Panc1 (cell line): ENCODE measurements at regions of chr6 and their contacts with region 1.

Region 1: DNA sequence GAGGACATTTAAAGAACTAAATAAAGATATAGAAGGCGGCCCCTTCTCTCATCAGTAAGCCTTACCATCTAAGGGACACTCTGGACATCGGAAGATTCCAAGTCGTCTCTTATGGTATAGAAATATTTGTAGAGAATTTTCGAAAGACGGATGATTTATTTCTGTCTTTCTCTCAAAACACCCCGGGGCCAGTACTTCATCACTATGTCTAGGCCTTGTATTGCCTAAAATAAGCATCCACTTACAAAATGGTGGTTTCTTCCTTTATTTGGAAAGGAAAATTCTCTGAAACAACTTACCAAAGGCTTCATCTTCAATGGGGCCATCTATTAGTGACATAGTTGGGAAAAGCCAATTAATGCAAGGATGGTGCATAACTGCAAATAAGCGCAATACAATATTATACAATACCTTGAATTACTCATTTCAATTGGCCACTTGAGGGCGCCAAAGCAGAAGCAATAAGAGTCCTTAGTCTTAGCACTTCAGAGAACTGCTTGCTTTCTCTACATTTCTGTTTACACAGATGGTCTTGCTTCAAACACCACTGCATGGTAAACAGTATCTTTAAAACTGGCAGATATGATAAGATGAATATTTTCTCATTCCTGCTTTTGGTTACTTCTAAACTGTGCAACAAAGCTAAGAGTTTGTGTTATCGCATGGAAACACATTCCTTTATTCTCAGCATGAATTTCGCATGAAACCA is 113.2 kb downstream of the VIP start:
- DNase-seq: peak; percentile 43
- ATAC-seq: peak; percentile 96
- H3K4me3 ChIP-seq: no peak overlapping the region
- H3K27ac ChIP-seq: no peak overlapping the region
- H3K4me1 ChIP-seq: no peaks in the 10 kb centered on the region
- H3K27me3 ChIP-seq: no peaks in the 10 kb centered on the region; the same call in 1 of the 2 replicates
- CTCF ChIP-seq: peak; percentile 68; the same call in 1 of the 2 replicates

Region 2: DNA sequence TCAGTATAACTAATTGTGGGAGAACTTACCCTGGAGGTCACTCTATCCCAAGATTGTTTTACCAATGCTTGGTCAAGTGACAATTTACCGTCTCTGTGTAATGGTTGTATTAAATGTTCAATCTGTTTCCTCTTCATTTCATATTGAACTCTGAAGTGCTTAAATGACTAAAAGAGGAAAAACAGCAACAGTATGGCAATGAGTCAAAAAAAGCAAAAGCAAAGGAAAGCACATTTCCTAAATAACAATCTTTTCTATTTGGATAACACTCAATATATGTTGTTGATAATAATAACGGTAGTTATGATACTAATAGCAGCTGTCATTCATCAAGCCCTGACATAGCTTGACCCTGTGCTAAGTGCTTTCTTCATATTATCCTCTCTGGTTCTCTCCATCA is 379.0 kb before region 1 on chr6:
- CTCF ChIA-PET with region 1: no interaction called
- POLR2A ChIA-PET with region 1: no interaction called
- in situ Hi-C with region 1: no loop called
- intact Hi-C with region 1: no loop called
- DNase-seq: no peak
- ATAC-seq: no peak
- H3K4me3 ChIP-seq: no peak overlapping the region
- H3K27ac ChIP-seq: no peak overlapping the region
- H3K4me1 ChIP-seq: no peaks in the 10 kb centered on the region
- H3K27me3 ChIP-seq: no peaks in the 10 kb centered on the region
- CTCF ChIP-seq: no peak

Region 3: GRCh38 chr6:152897799-152898399 is 34.1 kb after region 1 on chr6:
- CTCF ChIA-PET with region 1: no interaction called
- POLR2A ChIA-PET with region 1: no interaction called
- in situ Hi-C with region 1: no loop called
- intact Hi-C with region 1: loop called (anchors 1 kb)
- DNase-seq: peak; percentile 51
- ATAC-seq: peak; percentile 98
- H3K4me3 ChIP-seq: no peak overlapping the region
- H3K27ac ChIP-seq: no peak overlapping the region
- H3K4me1 ChIP-seq: no peaks in the 10 kb centered on the region
- H3K27me3 ChIP-seq: no peaks in the 10 kb centered on the region; the same call in 1 of the 2 replicates
- CTCF ChIP-seq: peak; percentile 94

Region 4: GRCh38 chr6:152941746-152942145 is 78.0 kb after region 1 on chr6:
- CTCF ChIA-PET with region 1: interaction called, 6 read pairs
- POLR2A ChIA-PET with region 1: no interaction called
- in situ Hi-C with region 1: no loop called
- intact Hi-C with region 1: loop called (anchors 1 kb)
- DNase-seq: no peak
- ATAC-seq: no peak
- H3K4me3 ChIP-seq: no peak overlapping the region
- H3K27ac ChIP-seq: no peak overlapping the region
- H3K4me1 ChIP-seq: no peaks in the 10 kb centered on the region
- H3K27me3 ChIP-seq: peaks cover 2% of the 10 kb centered on the region; the same call in 1 of the 2 replicates
- CTCF ChIP-seq: no peak

Region 5: GRCh38 chr6:152948150-152948768 is 84.5 kb after region 1 on chr6:
- CTCF ChIA-PET with region 1: interaction called, 8 read pairs
- POLR2A ChIA-PET with region 1: no interaction called
- in situ Hi-C with region 1: no loop called
- intact Hi-C with region 1: loop called (anchors 1 kb)
- DNase-seq: peak; percentile 20
- ATAC-seq: peak; percentile 92
- H3K4me3 ChIP-seq: peak overlapping the region in 1 of 2 experiments; percentile 29; a peak in 1 of 4 replicates
- H3K27ac ChIP-seq: no peak overlapping the region
- H3K4me1 ChIP-seq: peaks cover 4% of the 10 kb centered on the region; the same call in 1 of the 2 replicates
- H3K27me3 ChIP-seq: 0 out of 2 replicates have a peak, but pooled peaks cover 4% of the 10 kb centered on the region
- CTCF ChIP-seq: peak; percentile 78

Region 6: GRCh38 chr6:153023977-153024708 is 160.4 kb after region 1 on chr6:
- CTCF ChIA-PET with region 1: no interaction called
- POLR2A ChIA-PET with region 1: no interaction called
- in situ Hi-C with region 1: no loop called
- intact Hi-C with region 1: loop called (anchors 5 kb)
- DNase-seq: peak; percentile 45
- ATAC-seq: peak; percentile 99
- H3K4me3 ChIP-seq: no peak overlapping the region
- H3K27ac ChIP-seq: no peak overlapping the region
- H3K4me1 ChIP-seq: no peaks in the 10 kb centered on the region
- H3K27me3 ChIP-seq: no peaks in the 10 kb centered on the region
- CTCF ChIP-seq: peak; percentile 84